PC-9 (cell line): ENCODE measurements at regions of chr19 and their contacts with region 1.

Region 1: DNA sequence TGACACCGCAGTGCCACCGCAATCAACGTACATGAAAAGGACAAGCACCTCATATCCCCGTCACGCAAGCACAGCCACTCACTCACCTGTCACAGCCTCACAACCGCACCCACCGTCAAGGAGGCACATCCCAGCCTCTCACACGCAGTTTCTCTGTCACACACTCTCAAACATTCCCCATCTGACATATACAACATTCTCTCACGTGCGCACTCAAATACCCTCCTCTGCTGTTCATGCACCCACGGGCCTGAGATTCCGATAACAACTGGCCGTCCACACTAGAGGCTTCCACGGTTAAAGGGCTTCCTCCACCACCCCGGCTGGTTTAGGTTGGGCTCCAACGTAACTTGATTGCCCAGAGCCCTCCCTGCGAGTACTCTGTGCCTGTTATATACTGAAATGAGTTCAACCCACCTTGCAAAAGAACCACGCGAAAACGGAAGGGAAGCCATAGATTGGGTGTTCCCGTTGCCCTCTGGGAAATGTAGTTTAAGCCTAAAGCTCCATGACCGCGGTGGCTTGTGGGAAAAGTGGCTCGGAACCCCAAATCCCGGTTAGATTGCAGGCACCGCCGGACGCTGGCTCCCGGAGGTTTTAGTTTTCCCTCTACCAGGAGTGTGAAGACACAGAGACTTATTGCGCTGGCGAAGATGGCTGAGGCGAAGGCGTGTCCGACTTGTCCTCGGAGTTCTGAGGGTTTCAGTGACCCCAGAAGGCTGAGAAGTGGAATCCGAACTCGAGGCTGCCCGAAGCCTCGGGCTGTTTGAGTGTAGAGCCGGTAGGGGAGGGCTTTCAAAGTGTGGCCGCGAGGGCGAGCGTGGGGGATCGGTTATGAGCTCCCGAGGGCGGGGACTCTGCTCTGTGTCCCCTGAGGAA is at the start of gene ZNF573:
- DNase-seq: peak; percentile 77 to 82
- H3K4me3 ChIP-seq: peak within 1 kb of the TSS; percentile 73
- H3K27ac ChIP-seq: peak within 1 kb of the TSS; percentile 35
- H3K4me1 ChIP-seq: peaks cover 4% of the 10 kb centered on the region; the same call in 1 of the 2 replicates
- H3K27me3 ChIP-seq: no peaks in the 10 kb centered on the region
- CTCF ChIP-seq: no peak
- total RNA-seq, gene ZNF573: 5.5 and 7.9 TPM in 2 replicates

Region 2: DNA sequence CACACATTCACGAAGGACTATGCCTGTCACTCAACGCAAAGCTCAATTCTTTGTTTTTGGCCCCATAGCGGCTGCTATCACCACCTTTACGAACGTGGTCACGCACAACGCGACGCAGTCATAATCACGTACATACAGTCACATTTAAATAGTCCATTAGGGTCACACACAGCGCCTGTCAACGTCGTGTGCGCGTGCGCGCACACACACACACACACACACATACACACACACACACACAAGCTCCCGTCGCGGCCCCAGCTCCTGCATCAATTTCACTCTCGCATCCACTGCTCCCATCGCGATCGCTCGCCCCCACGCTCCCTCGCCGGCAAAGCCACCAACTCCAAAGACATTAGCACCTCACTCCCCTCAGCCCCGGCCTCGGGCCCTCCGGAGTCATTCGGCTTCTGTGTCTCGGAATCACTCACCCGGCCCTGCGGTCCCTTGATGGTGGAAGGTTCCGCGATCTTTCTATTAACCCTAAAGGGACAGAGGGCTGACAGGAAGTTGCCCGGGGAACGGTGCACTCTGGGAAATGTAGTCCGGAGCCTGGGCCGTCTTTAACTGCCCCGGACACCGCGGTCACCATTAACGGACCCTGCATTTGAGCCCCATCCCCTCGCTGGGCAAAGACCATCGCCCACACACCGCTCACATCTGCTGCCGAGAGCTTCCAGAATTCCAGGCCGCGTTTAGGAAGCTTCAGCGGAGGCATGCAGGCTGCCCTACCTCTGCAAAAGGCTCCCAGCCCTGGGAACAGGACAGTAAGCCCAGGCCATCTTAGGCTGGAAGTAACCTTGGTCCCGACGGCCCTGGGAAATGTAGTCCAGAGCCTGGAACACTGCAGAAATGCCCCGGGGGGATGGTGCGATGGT is 941.2 kb before region 1 on chr19 and contains the start of gene ZNF790:
- CTCF ChIA-PET with region 1: no interaction called
- POLR2A ChIA-PET with region 1: interaction called, 11 read pairs
- intact Hi-C with region 1: no loop called
- DNase-seq: peak; percentile 80 to 82
- H3K4me3 ChIP-seq: peak within 1 kb of the TSS; percentile 74
- H3K27ac ChIP-seq: no peak within 1 kb of the TSS
- H3K4me1 ChIP-seq: no peaks in the 10 kb centered on the region
- H3K27me3 ChIP-seq: no peaks in the 10 kb centered on the region
- CTCF ChIP-seq: no peak
- total RNA-seq, gene ZNF790: 5.0 and 5.9 TPM in 2 replicates

Region 3: GRCh38 chr19:37719111-37719926 is 60.0 kb before region 1 on chr19 and contains the start of gene ZNF607:
- CTCF ChIA-PET with region 1: no interaction called
- POLR2A ChIA-PET with region 1: no interaction called
- intact Hi-C with region 1: loop called (anchors 2 kb)
- DNase-seq: peak; percentile 88 to 92
- H3K4me3 ChIP-seq: peak within 1 kb of the TSS; percentile 60
- H3K27ac ChIP-seq: no peak within 1 kb of the TSS
- H3K4me1 ChIP-seq: peaks cover 11% of the 10 kb centered on the region; the same call in 1 of the 2 replicates
- H3K27me3 ChIP-seq: no peaks in the 10 kb centered on the region
- CTCF ChIP-seq: peak; percentile 74
- total RNA-seq, gene ZNF607: 10.6 and 12.5 TPM in 2 replicates